ENCODE measurements at regions of chr5 and their contacts with region 1.

Region 1: DNA sequence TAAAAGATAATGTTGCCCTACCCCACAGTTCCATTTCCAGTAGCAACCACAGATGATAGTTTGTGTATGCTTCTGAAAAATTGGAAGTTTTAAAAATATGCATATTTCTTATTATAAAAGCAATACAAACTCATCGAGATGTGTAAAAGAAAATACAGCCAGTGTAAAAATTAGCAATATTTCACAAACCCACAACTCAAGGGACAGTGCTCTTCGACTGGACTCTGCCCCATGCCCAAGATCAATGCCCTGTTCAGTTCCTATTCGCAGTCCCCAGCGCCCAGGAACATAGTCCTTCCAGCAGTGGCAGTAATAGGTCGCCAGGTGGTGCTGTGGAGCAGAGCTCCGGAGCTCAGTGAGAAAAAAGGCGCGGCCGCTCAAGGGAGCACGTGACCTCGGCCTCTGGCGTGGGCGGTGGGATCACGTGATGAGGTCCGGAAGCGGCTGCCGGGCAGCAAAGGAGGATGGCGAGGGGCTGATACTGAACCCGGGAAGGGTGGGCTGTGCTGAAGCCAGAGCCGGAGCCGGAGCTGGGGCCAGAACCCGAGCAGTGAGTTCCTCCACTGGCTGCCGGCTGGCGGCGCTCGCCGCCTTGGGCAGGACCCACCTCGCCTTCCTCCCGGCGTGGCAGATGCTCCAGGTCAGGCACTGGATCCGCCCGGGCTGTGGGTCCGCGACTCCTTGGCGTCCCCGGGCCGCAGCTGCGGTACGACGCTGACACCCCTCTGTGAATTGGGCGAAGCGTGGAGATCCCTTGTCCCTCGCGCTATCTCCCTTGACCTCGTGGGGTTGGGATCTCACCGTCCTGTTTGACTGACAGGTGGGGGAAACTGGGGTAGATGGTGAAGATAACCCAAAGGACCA is at the start of gene SLC36A1:
- DNase-seq: peak; percentile 94 to 95
- ATAC-seq: peak; percentile 90 to 98 (median 94)
- H3K4me3 ChIP-seq: peak within 1 kb of the TSS; percentile 63 to 92 (median 80)
- H3K27ac ChIP-seq: peak within 1 kb of the TSS in 8 of 10 donors; percentile 27 to 87 (median 60)
- H3K4me1 ChIP-seq: peaks cover 0 to 30% (median 11%) of the 10 kb centered on the region in 9 donors
- H3K27me3 ChIP-seq: peaks cover 0 to 13% (median 6%) of the 10 kb centered on the region in 7 donors
- CTCF ChIP-seq: peak; percentile 96 to 99 (median 96)
- total RNA-seq, gene SLC36A1: 0.94 to 15.3 (median 2.7) TPM

Region 2: GRCh38 chr5:151480384-151481293 is 33.2 kb after region 1 on chr5:
- intact Hi-C with region 1: no loop called
- DNase-seq: no peak
- ATAC-seq: peak in 4 of 8 donors; percentile 44 to 75 (median 65)
- H3K4me3 ChIP-seq: no peak overlapping the region
- H3K27ac ChIP-seq: peak overlapping the region in 1 of 10 donors; percentile 76
- H3K4me1 ChIP-seq: peaks cover 0 to 44% (median 7%) of the 10 kb centered on the region in 9 donors
- H3K27me3 ChIP-seq: no peaks in the 10 kb centered on the region
- CTCF ChIP-seq: no peak

Region 3: DNA sequence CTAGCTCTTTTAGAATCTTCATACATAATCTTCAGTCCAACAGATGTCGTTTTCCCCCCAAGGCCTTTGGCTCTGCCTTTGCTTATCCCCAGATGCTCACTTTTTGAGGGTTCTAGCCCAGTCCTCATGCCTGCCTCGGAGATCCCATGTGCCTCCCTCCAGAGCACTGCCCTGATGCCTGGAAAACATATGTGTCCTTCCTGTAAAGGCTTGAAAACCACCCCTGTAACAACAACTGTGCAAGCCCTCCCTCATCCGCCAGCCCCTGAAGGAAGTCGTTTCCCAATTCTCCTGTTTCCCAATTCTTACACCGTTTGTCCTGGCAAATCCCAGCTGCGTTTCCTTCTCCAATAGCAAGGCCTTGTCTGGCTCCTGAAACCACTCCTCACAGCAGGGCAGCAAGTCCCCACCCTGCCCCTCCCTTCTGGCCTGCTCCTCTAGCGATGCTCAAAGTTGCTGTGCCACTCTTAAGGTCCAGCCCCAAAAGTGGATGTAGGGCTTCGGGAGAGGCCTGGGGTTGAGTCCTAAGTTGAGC is 52.2 kb after region 1 on chr5:
- intact Hi-C with region 1: loop called (anchors 1 to 5 kb)
- DNase-seq: no peak
- ATAC-seq: peak in 1 of 8 donors; percentile 44
- H3K4me3 ChIP-seq: no peak overlapping the region
- H3K27ac ChIP-seq: peak overlapping the region in 1 of 10 donors; percentile 31
- H3K4me1 ChIP-seq: peaks cover 0 to 23% (median 0%) of the 10 kb centered on the region in 9 donors
- H3K27me3 ChIP-seq: no peaks in the 10 kb centered on the region
- CTCF ChIP-seq: no peak

Region 4: GRCh38 chr5:151740336-151740942 is 293.0 kb after region 1 on chr5:
- intact Hi-C with region 1: loop called in 8 of 10 experiments (anchors 2 to 10 kb)
- DNase-seq: peak; percentile 48 to 70
- ATAC-seq: peak; percentile 80 to 90 (median 84)
- H3K4me3 ChIP-seq: peak overlapping the region in 4 of 10 donors; percentile 12 to 29 (median 23)
- H3K27ac ChIP-seq: peak overlapping the region in 9 of 10 donors; percentile 38 to 84 (median 64)
- H3K4me1 ChIP-seq: peaks cover 0 to 53% (median 23%) of the 10 kb centered on the region in 9 donors
- H3K27me3 ChIP-seq: no peaks in the 10 kb centered on the region
- CTCF ChIP-seq: peak; percentile 83 to 94 (median 91)

Measured in heart right ventricle (tissue), 16 donors.